PC-3 (cell line): ENCODE measurements at regions of chr5 and their contacts with region 1.

Region 1: DNA sequence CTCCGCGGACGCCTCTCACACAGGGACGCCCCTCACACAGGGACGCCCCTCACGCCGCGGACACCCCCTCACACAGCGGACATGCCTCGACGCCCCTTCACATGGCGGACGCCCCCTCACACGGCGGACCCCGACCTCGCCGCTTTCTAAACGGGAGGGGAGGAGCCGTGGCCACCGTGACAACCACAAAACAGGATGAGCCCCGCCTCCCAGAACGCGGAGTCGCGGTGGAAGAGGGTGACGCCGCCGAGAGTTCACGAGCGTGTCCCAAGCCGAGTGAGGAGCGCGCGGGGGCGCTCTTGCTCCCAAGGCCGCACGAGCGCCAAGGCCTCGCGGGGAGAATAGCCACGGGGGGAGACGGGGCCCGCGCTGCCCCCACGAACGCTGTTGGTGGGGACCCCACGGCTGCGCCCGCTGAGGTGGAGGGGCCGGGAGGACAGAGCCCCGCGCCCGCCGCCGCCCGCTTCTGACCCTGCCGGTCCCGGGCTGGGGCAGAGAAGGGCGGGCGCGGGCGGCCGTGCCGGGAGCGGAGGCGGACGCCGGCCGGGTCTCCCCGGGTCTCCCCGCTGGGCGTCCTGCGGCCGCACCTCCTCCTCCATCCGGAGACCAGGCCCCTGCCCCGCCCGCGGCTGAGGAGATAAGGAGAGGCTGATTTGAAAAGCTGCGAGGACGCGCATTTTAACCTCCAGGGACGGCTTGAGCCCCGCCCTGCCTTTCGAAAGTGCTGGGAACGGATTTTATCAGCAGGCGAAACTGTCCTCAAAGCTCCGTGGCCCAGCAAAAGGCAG is 3.9 kb upstream of the NKD2 start:
- DNase-seq: peak; percentile 55
- ATAC-seq: peak; percentile 54
- H3K4me3 ChIP-seq: peak overlapping the region; percentile 64
- H3K27ac ChIP-seq: no peak overlapping the region
- H3K4me1 ChIP-seq: peaks cover 26% of the 10 kb centered on the region
- H3K27me3 ChIP-seq: peaks cover 30% of the 10 kb centered on the region
- CTCF ChIP-seq: peak; percentile 67

Region 2: DNA sequence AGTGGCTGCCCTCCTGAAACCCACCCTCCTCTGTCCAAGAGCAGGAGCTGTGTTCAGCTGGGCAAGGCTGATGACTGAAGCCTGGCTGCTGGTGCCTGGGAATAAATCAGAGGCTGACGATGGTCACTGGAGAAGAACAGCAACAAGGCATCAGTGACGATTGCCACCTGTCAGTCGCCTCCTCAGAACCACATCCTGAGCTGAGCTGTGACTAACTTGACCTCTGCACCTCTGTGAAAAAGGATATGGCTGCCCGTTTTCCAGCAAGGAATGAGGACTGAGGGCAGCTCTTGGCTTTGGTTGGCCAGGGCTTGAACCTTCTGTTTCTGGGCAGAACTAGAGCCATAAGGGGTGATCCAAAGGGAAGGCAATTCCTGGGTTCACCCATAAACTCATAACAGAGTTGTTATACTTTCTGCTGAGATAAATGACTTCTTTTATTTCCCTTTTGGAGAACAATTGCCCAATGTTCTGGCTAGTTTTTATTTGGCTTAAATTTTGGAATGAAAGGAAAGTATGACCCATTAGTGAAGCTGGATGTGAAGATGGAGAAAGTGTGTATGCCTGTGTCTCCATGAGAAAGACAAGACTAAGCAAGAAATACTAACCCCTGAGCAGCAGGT is 71.9 kb before region 1 on chr5:
- CTCF ChIA-PET with region 1: no interaction called
- POLR2A ChIA-PET with region 1: no interaction called
- intact Hi-C with region 1: loop called (anchors 5 kb)
- DNase-seq: peak; percentile 70
- ATAC-seq: peak; percentile 52
- H3K4me3 ChIP-seq: no peak overlapping the region
- H3K27ac ChIP-seq: peak overlapping the region; percentile 77
- H3K4me1 ChIP-seq: peaks cover 31% of the 10 kb centered on the region
- H3K27me3 ChIP-seq: no peaks in the 10 kb centered on the region
- CTCF ChIP-seq: no peak

Region 3: GRCh38 chr5:1118231-1118698 is 113.6 kb after region 1 on chr5:
- CTCF ChIA-PET with region 1: no interaction called
- POLR2A ChIA-PET with region 1: no interaction called
- intact Hi-C with region 1: no loop called
- DNase-seq: peak; percentile 49
- ATAC-seq: peak; percentile 68
- H3K4me3 ChIP-seq: no peak overlapping the region
- H3K27ac ChIP-seq: peak overlapping the region; percentile 31
- H3K4me1 ChIP-seq: peaks cover 28% of the 10 kb centered on the region
- H3K27me3 ChIP-seq: no peaks in the 10 kb centered on the region
- CTCF ChIP-seq: no peak